CD8-positive, alpha-beta memory T cell (primary cell): ENCODE measurements at regions of chr17 and their contacts with region 1.

Region 1: DNA sequence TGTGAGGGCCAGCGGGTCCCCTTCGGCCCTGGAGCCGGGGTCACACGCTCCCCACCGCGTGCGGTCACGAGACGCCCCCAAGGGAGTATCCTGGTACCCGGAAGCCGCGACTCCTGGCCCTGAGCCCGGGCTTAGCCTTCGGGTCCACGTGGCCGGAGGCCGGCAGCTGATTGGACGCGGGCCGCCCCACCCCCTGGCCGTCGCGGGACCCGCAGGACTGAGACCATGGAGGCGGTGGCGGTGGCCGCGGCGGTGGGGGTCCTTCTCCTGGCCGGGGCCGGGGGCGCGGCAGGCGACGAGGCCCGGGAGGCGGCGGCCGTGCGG is at the start of gene NAGLU:
- DNase-seq: peak; percentile 66 to 87 (median 78)
- H3K4me3 ChIP-seq: peak within 1 kb of the TSS; percentile 70
- H3K4me3 Mint-ChIP-seq: peak within 1 kb of the TSS; percentile 76 to 89 (median 84)
- H3K27ac ChIP-seq: peak within 1 kb of the TSS; percentile 55
- H3K27ac Mint-ChIP-seq: peak within 1 kb of the TSS; percentile 32 to 89 (median 54)
- H3K4me1 ChIP-seq: peaks cover 31% of the 10 kb centered on the region
- H3K4me1 Mint-ChIP-seq: peaks cover 35 to 53% (median 39%) of the 10 kb centered on the region in 3 donors
- H3K27me3 ChIP-seq: no peaks in the 10 kb centered on the region
- H3K27me3 Mint-ChIP-seq: no peaks in the 10 kb centered on the region
- total RNA-seq, gene NAGLU: 15.8 to 17.4 TPM

Region 2: GRCh38 chr17:42598905-42599304 is 62.9 kb after region 1 on chr17:
- CTCF ChIA-PET with region 1: no interaction called
- POLR2A ChIA-PET with region 1: interaction called, 11 read pairs
- DNase-seq: no peak
- H3K4me3 ChIP-seq: no peak overlapping the region
- H3K4me3 Mint-ChIP-seq: peak overlapping the region in 1 of 7 donors; percentile 15
- H3K27ac ChIP-seq: no peak overlapping the region
- H3K27ac Mint-ChIP-seq: peak overlapping the region in 3 of 8 donors; percentile 26 to 60 (median 43)
- H3K4me1 ChIP-seq: peaks cover 15% of the 10 kb centered on the region
- H3K4me1 Mint-ChIP-seq: peaks cover 27 to 45% (median 39%) of the 10 kb centered on the region in 3 donors
- H3K27me3 ChIP-seq: no peaks in the 10 kb centered on the region
- H3K27me3 Mint-ChIP-seq: no peaks in the 10 kb centered on the region

Region 3: DNA sequence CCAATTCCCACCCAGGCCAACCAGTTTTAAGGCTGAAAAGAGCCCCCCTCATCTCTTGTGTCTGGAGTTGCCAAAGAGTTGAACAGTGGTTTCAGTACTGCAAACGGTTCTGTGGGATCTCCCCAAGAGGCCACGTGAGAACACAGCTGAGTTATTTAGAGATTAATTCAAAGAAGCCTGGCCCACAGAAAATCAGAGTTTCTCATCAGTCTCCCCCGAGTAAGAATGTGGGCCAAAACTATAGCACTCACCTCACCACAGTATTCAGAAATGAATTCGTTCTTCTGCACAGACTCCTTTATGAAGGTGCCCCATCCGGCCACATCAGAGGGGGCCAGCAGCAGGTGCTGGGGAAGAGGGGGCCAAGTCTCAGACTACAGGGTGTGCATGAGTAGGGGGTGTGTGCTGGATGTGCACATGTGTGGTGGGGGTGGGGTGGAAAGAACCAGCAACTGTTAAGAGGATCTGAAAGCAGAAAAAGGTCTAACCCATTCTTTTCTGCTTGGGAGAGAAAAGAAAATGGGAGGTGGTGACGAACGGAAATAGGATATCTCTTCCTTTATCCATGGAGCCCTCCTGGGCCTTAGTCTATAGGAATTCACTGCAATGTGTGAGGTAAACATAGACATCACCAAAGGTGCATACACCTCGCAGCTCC is 169.0 kb after region 1 on chr17:
- CTCF ChIA-PET with region 1: no interaction called
- POLR2A ChIA-PET with region 1: no interaction called
- DNase-seq: no peak
- H3K4me3 ChIP-seq: no peak overlapping the region
- H3K4me3 Mint-ChIP-seq: peak overlapping the region in 1 of 7 donors; percentile 37
- H3K27ac ChIP-seq: no peak overlapping the region
- H3K27ac Mint-ChIP-seq: peak overlapping the region in 1 of 8 donors; percentile 3
- H3K4me1 ChIP-seq: peaks cover 24% of the 10 kb centered on the region
- H3K4me1 Mint-ChIP-seq: peaks cover 10 to 49% (median 16%) of the 10 kb centered on the region in 3 donors
- H3K27me3 ChIP-seq: no peaks in the 10 kb centered on the region
- H3K27me3 Mint-ChIP-seq: no peaks in the 10 kb centered on the region